ENCODE measurements at regions of chr15 and their contacts with region 1.

Region 1: DNA sequence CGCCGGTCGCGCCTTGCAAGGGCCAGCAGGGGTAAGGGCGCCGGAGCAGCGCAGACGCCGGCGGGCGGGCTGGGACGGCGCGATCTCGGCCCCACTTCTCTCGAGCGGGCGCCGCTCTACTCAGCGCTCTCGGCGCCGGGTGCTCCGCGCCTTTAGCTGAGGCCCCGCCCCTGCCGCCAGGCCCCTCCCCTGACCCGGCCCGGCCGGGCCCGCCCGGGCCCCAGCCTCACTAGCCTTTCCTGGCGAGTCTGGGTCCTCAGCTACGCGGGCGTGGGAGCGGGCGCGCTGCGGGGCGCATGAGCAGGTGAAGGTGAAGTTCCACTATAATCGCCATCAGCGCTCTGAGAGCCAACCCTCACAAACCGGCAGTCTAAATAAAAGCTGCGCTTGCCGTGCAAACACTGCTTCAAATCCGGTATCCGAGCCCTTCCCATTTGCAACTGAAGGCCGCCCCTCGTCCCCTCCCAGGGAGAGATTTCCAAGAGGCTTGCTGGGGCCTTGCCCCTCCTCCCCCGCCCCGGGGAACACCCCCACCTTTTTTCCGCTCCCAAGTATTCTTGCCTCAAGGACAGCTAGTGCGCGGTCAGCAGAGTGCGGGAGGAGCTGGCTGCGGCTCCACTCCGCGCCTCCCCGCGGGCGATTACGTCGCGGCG is at the start of gene RPP25:
- H3K4me3 ChIP-seq: peak within 1 kb of the TSS; percentile 46
- H3K27ac ChIP-seq: peak within 1 kb of the TSS; percentile 67
- H3K4me1 ChIP-seq: peaks cover 4% of the 10 kb centered on the region; the same call in 1 of the 2 replicates
- CTCF ChIP-seq: no peak

Region 2: GRCh38 chr15:74758736-74759135 is 198.0 kb before region 1 on chr15:
- CTCF ChIA-PET with region 1: no interaction called
- POLR2A ChIA-PET with region 1: no interaction called
- H3K4me3 ChIP-seq: no peak overlapping the region
- H3K27ac ChIP-seq: no peak overlapping the region
- H3K4me1 ChIP-seq: no peaks in the 10 kb centered on the region
- CTCF ChIP-seq: no peak

Region 3: DNA sequence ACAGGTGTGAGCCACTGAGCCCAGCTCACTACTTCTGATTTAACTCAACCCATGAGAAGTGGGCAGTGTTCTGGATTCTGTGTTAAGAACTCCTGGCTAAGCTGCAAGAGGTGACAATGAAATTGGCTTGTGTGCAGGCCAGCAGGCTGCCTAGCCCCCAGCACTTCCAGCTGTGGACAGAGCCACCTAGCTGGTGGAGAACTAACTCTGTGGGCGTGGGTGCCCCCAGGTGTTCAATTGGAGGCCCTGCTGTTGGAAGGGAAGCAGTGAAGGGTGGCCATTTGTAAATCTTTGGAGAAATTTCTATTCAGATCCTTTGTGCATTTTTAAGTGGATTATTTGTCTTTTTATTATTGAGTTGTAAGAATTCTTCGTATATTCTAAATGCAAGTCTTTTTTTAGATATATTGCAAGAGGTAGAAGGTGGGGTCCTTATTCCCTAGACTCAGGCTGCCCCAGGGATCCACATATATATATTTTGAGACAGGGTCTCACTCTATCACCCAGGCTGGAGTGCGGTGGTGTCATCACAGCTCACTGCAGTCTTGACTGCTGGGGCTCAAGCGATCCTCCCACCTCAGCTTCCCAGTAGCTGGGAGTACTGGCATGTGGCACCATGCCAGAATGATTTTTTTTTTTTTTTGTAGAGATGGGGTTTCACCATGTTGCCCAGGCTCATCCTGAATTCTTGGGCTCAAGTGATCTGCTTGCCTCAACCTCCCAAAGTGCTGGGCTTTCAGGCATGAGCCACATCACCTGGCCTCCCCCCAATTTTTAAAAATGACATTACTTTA is 31.4 kb after region 1 on chr15:
- CTCF ChIA-PET with region 1: interaction called, 8 read pairs
- POLR2A ChIA-PET with region 1: interaction called, 10 read pairs
- H3K4me3 ChIP-seq: no peak overlapping the region
- H3K27ac ChIP-seq: no peak overlapping the region
- H3K4me1 ChIP-seq: no peaks in the 10 kb centered on the region
- CTCF ChIP-seq: peak; percentile 82

Region 4: GRCh38 chr15:74995241-74995778 is 38.5 kb after region 1 on chr15 and contains the start of gene SCAMP5:
- CTCF ChIA-PET with region 1: no interaction called
- POLR2A ChIA-PET with region 1: interaction called, 11 read pairs
- H3K4me3 ChIP-seq: peak within 1 kb of the TSS; percentile 69
- H3K27ac ChIP-seq: no peak within 1 kb of the TSS
- H3K4me1 ChIP-seq: no peaks in the 10 kb centered on the region; the same call in 1 of the 2 replicates
- CTCF ChIP-seq: no peak